Mucosa of descending colon (tissue), 3 donors: ENCODE measurements at regions of chr11 and their contacts with region 1.

Region 1: DNA sequence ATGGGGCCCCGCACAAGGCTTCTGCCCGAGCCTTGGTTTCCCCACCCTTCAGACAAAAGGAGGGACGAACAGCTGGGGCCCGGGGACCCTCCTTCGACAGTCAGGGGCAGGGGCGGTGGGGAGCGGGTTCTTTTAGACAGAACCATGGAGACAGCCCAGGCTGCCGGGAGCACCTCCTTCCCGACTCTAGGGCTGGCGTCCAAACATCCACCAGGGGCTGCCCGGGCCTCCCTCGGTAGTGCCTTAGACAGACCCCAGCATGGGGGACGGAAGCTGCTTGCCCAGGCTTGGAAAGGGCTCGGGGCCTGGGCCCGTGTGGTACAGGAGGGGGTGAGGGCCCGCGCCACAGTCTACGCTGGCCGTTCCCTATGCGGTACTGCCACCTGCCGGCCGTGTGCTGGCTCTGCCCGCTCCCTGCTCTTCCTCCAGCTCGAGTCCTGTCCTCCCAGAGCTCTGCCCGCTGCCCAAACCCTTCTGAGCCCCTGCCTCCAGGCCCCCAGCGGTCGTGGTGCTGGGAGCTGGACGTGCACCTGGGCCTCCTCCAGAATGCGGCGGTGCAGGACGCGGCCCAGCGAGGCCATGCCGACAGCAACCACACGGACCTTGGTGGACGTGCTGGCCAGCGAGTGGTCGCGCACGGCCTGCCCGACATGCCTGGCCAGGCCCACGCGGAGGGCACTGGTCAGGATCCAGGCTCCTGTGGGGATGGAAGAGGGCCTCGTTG is 20.1 kb downstream of the TSSC4 start:
- DNase-seq: peak; percentile 75 to 84 (median 79)
- ATAC-seq: peak; percentile 91
- H3K4me3 ChIP-seq: no peak overlapping the region
- H3K4me1 ChIP-seq: peaks cover 10% of the 10 kb centered on the region
- CTCF ChIP-seq: peak; percentile 87

Region 2: GRCh38 chr11:2186669-2187279 is 233.9 kb before region 1 on chr11:
- intact Hi-C with region 1: loop called in 1 of 2 experiments (anchors 10 kb)
- DNase-seq: peak in 1 of 3 donors; percentile 48
- ATAC-seq: peak; percentile 71
- H3K4me3 ChIP-seq: no peak overlapping the region
- H3K4me1 ChIP-seq: no peaks in the 10 kb centered on the region
- CTCF ChIP-seq: peak; percentile 22

Region 3: GRCh38 chr11:2196970-2197770 is 223.5 kb before region 1 on chr11:
- intact Hi-C with region 1: loop called in 1 of 2 experiments (anchors 5 kb)
- DNase-seq: peak; percentile 84 to 86 (median 85)
- ATAC-seq: peak; percentile 80
- H3K4me3 ChIP-seq: no peak overlapping the region
- H3K4me1 ChIP-seq: peaks cover 9% of the 10 kb centered on the region
- CTCF ChIP-seq: peak; percentile 88

Region 4: GRCh38 chr11:2298795-2299761 is 121.6 kb before region 1 on chr11:
- intact Hi-C with region 1: loop called (anchors 2 to 5 kb)
- DNase-seq: peak; percentile 22 to 52 (median 51)
- ATAC-seq: peak; percentile 26
- H3K4me3 ChIP-seq: no peak overlapping the region
- H3K4me1 ChIP-seq: no peaks in the 10 kb centered on the region
- CTCF ChIP-seq: no peak

Region 5: GRCh38 chr11:2305140-2305840 is 115.4 kb before region 1 on chr11:
- intact Hi-C with region 1: loop called (anchors 2 to 5 kb)
- DNase-seq: peak; percentile 88 to 93 (median 88)
- ATAC-seq: peak; percentile 75
- H3K4me3 ChIP-seq: no peak overlapping the region
- H3K4me1 ChIP-seq: peaks cover 8% of the 10 kb centered on the region
- CTCF ChIP-seq: peak; percentile 80

Region 6: DNA sequence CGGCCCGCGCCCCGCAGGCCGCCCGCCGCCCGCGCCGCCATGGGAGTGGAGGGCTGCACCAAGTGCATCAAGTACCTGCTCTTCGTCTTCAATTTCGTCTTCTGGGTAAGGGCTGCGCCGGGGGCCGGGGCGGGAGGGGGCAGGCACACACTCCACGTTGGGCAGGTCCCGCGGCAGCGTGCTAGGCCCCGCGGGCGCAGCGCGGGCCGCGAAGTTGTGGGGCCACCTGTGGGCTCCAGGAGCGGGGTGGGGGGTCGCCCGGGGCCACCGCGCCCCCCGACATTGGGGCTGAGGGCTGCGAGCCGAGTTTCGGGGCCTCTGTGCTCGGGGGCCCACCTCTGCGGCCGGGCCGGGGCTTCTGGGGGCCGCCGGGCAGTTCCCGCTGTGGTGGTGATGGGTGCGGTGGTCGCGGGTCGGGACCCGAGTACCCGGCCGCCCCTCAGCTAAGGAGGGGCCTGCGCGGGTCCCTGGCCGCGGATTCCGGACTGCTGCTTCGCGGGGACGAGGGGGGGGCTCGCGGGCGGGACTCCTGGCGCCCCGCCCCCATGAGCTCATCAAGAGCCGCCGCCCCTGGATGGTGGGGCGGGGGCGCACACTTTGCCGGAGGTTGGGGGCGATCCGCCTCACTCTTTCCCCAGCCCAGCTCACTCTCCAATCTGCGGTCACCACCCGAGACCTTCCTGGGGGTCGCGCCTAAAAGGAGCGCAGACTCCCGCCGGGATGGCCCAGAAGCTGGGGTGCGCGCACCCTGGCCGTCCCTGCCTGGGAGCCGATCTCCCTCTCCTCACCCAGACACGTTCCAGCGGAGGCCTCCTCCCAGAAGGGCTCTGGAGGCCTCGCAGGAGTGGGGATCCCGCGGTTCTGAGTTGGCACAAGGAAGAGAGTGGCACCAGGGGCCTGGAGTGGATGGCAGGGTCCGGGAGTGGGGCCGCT is 42.9 kb before region 1 on chr11:
- intact Hi-C with region 1: no loop called
- DNase-seq: peak; percentile 74 to 78 (median 75)
- ATAC-seq: peak; percentile 47
- H3K4me3 ChIP-seq: peak overlapping the region; percentile 96
- H3K4me1 ChIP-seq: peaks cover 54% of the 10 kb centered on the region
- CTCF ChIP-seq: no peak

Region 7: GRCh38 chr11:2474061-2474901 is 53.6 kb after region 1 on chr11:
- intact Hi-C with region 1: no loop called
- DNase-seq: peak; percentile 61 to 71 (median 66)
- ATAC-seq: peak; percentile 96
- H3K4me3 ChIP-seq: no peak overlapping the region
- H3K4me1 ChIP-seq: no peaks in the 10 kb centered on the region
- CTCF ChIP-seq: no peak

Region 8: GRCh38 chr11:2778630-2779498 is 358.2 kb after region 1 on chr11:
- intact Hi-C with region 1: no loop called
- DNase-seq: peak; percentile 78 to 88 (median 86)
- ATAC-seq: peak; percentile 90
- H3K4me3 ChIP-seq: no peak overlapping the region
- H3K4me1 ChIP-seq: peaks cover 12% of the 10 kb centered on the region
- CTCF ChIP-seq: peak; percentile 17

Region 9: DNA sequence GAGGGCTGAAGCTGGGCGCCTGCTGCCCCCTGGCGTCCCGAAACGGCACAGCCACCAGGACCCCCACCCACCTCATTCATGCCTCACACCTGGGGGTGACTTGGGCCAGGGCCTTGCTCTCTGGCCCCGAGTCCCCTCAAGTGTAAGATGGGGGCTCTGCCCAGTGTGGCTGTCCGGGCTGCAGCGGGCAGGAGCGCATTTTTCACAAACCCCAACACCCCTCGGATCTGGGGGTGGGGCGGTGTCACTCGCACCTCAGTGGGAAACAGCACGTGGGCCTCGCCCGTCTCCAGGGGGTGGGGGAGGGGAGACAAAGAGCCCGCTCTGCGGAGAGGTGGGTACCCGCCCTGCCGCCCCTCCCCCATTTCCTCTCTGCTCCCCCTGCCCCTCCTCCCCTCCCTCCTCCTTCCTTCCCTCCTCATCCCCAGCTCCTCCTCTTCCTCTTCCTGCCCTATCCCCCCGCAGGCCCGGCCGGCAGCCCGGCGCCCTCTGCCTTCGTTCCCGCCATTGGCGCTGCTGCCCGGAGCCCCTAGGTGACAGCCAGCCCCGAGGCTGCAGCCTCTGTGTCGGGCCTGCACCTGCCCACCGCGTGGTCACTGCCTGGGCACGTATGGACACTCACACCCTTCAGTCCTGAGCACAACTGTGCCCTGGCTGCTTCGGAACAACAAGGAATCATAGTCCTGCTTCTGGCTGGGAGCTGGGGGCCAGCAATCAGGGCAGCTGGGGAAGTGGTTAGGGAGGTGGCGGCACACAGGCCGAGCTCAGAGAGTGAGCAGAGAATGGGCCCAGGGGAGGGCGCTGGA is 471.8 kb after region 1 on chr11:
- intact Hi-C with region 1: loop called in 1 of 2 experiments (anchors 10 kb)
- DNase-seq: peak; percentile 67 to 83 (median 75)
- ATAC-seq: peak; percentile 59
- H3K4me3 ChIP-seq: no peak overlapping the region
- H3K4me1 ChIP-seq: peaks cover 11% of the 10 kb centered on the region
- CTCF ChIP-seq: peak; percentile 76